ENCODE measurements at regions of chr7 and their contacts with region 1.

Region 1: GRCh38 chr7:80047856-80048459 is 86.7 kb upstream of the GNAI1 start:
- DNase-seq: no peak
- H3K4me3 ChIP-seq: no peak overlapping the region
- H3K27ac ChIP-seq: no peak overlapping the region
- H3K4me1 ChIP-seq: no peaks in the 10 kb centered on the region
- H3K27me3 ChIP-seq: no peaks in the 10 kb centered on the region
- CTCF ChIP-seq: no peak
- POLR2A ChIP-seq: no peak

Region 2: GRCh38 chr7:79272066-79272669 is 775.8 kb before region 1 on chr7:
- CTCF ChIA-PET with region 1: interaction called, 16 read pairs
- POLR2A ChIA-PET with region 1: no interaction called
- dilution Hi-C with region 1: no loop called
- intact Hi-C with region 1: no loop called
- DNase-seq: peak; percentile 55
- H3K4me3 ChIP-seq: no peak overlapping the region
- H3K27ac ChIP-seq: no peak overlapping the region
- H3K4me1 ChIP-seq: peaks cover 7% of the 10 kb centered on the region
- H3K27me3 ChIP-seq: no peaks in the 10 kb centered on the region
- CTCF ChIP-seq: peak; percentile 41 to 45
- POLR2A ChIP-seq: no peak

Region 3: GRCh38 chr7:79806161-79806734 is 241.7 kb before region 1 on chr7:
- CTCF ChIA-PET with region 1: interaction called, 14 read pairs
- POLR2A ChIA-PET with region 1: no interaction called
- dilution Hi-C with region 1: no loop called
- intact Hi-C with region 1: no loop called
- DNase-seq: peak; percentile 17
- H3K4me3 ChIP-seq: no peak overlapping the region
- H3K27ac ChIP-seq: no peak overlapping the region
- H3K4me1 ChIP-seq: no peaks in the 10 kb centered on the region
- H3K27me3 ChIP-seq: no peaks in the 10 kb centered on the region
- CTCF ChIP-seq: no peak
- POLR2A ChIP-seq: no peak

Region 4: DNA sequence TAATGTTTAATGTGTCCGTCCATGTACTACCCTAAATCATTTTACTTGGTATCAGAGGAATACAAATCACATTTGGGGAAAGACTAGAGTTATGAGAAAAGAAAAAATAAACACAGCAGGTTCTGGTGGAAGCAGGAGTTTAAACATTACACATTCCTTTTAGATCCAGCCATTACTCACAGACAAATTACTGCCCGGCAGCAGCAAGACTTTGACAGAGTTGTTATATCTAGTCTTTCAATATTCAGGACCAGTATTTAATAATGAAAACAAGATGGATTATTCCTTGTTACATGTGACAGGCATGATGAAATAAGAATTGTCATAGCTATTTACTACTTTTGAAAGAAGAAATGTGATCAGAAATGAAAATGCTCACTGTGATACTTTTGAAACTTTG is 45.1 kb before region 1 on chr7:
- CTCF ChIA-PET with region 1: no interaction called
- POLR2A ChIA-PET with region 1: no interaction called
- dilution Hi-C with region 1: no loop called
- intact Hi-C with region 1: no loop called
- DNase-seq: no peak
- H3K4me3 ChIP-seq: no peak overlapping the region
- H3K27ac ChIP-seq: no peak overlapping the region
- H3K4me1 ChIP-seq: no peaks in the 10 kb centered on the region
- H3K27me3 ChIP-seq: no peaks in the 10 kb centered on the region
- CTCF ChIP-seq: no peak
- POLR2A ChIP-seq: no peak